ENCODE measurements at regions of chr9 and their contacts with region 1.

Region 1: DNA sequence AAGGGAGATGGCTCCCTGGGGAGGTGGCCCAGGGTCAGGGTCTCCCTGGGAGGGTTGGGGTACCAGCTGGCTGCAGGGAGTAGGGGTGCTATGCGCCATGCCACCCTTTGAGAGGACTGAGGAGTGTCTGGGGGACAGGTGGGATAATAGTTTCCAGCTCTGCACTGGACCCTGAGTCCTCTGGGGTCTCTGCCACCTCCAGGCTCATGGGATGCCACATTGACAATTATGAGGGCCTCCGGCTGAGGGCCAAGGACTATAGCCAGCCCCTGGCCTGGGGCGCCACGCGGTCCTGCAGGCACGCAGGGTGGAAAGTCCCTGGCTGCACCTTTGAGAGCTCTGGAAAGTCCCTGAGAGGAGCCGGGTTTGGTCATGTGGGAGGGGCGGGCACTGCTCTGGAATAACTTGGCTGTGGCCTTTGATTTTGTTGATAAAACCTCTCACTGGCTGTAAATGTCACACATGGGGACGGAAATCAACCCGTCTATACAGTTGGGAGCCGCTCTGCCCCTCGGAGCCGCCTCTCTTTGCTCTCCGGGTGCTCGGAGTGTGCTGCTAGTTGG is 16.0 kb downstream of the TRAF2 start:
- DNase-seq: peak; percentile 78 to 98 (median 84)
- H3K4me3 ChIP-seq: peak overlapping the region; percentile 13 to 53
- H3K4me3 Mint-ChIP-seq: peak overlapping the region; percentile 81 to 90 (median 84)
- H3K27ac ChIP-seq: peak overlapping the region; percentile 96
- H3K27ac Mint-ChIP-seq: peak overlapping the region; percentile 98 to 100 (median 99)
- H3K4me1 ChIP-seq: peaks cover 41% of the 10 kb centered on the region
- H3K4me1 Mint-ChIP-seq: peaks cover 27 to 57% (median 38%) of the 10 kb centered on the region in 4 donors
- H3K27me3 ChIP-seq: no peaks in the 10 kb centered on the region
- H3K27me3 Mint-ChIP-seq: no peaks in the 10 kb centered on the region

Region 2: GRCh38 chr9:136790927-136791641 is 111.3 kb before region 1 on chr9 and contains the start of gene TMEM141:
- CTCF ChIA-PET with region 1: no interaction called
- POLR2A ChIA-PET with region 1: no interaction called
- intact Hi-C with region 1: no loop called
- DNase-seq: peak; percentile 99 to 100 (median 99)
- H3K4me3 ChIP-seq: peak within 1 kb of the TSS; percentile 61 to 86
- H3K4me3 Mint-ChIP-seq: peak within 1 kb of the TSS; percentile 81 to 88 (median 85)
- H3K27ac ChIP-seq: peak within 1 kb of the TSS; percentile 93
- H3K27ac Mint-ChIP-seq: peak within 1 kb of the TSS; percentile 91 to 98 (median 95)
- H3K4me1 ChIP-seq: peaks cover 31% of the 10 kb centered on the region
- H3K4me1 Mint-ChIP-seq: peaks cover 8 to 42% (median 24%) of the 10 kb centered on the region in 4 donors
- H3K27me3 ChIP-seq: no peaks in the 10 kb centered on the region
- H3K27me3 Mint-ChIP-seq: no peaks in the 10 kb centered on the region
- total RNA-seq, gene TMEM141: 51.1 to 53.4 TPM

Region 3: DNA sequence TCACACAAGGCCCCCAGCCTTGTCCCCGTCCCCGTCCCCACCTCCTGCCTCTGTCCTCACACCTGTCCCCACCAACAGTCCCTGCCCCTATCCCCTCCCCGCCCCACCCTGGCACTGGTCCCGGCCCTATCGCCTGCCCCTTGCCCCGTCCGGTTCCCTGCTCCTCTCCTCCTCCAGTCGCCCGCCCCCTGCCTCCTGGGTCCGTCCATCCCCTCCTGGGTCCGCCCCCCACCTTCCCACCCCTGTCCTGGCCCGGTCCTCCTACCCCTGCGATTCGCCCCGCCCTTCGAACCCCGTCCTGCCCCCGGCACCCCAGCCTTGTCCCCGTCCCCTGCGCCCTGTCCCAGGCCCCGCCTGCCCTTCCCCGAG is 36.6 kb before region 1 on chr9:
- CTCF ChIA-PET with region 1: no interaction called
- POLR2A ChIA-PET with region 1: interaction called, 5 read pairs
- intact Hi-C with region 1: loop called (anchors 5 kb)
- DNase-seq: peak in 1 of 5 donors; percentile 50
- H3K4me3 ChIP-seq: peak overlapping the region; percentile 40 to 75
- H3K4me3 Mint-ChIP-seq: peak overlapping the region; percentile 75 to 93 (median 85)
- H3K27ac ChIP-seq: peak overlapping the region; percentile 87
- H3K27ac Mint-ChIP-seq: peak overlapping the region; percentile 75 to 94 (median 85)
- H3K4me1 ChIP-seq: peaks cover 18% of the 10 kb centered on the region
- H3K4me1 Mint-ChIP-seq: peaks cover 4 to 23% (median 11%) of the 10 kb centered on the region in 4 donors
- H3K27me3 ChIP-seq: no peaks in the 10 kb centered on the region
- H3K27me3 Mint-ChIP-seq: no peaks in the 10 kb centered on the region

Measured in CD4-positive, alpha-beta memory T cell (primary cell).